PC-3 (cell line): ENCODE measurements at regions of chr4 and their contacts with region 1.

Region 1: GRCh38 chr4:47485047-47485692 is at the start of gene ATP10D:
- DNase-seq: peak; percentile 83
- ATAC-seq: peak; percentile 100
- H3K4me3 ChIP-seq: peak within 1 kb of the TSS; percentile 79
- H3K27ac ChIP-seq: peak within 1 kb of the TSS; percentile 44
- H3K4me1 ChIP-seq: peaks cover 11% of the 10 kb centered on the region
- H3K27me3 ChIP-seq: no peaks in the 10 kb centered on the region
- CTCF ChIP-seq: no peak
- total RNA-seq, gene ATP10D: 0.84 and 4.0 TPM in 2 replicates

Region 2: DNA sequence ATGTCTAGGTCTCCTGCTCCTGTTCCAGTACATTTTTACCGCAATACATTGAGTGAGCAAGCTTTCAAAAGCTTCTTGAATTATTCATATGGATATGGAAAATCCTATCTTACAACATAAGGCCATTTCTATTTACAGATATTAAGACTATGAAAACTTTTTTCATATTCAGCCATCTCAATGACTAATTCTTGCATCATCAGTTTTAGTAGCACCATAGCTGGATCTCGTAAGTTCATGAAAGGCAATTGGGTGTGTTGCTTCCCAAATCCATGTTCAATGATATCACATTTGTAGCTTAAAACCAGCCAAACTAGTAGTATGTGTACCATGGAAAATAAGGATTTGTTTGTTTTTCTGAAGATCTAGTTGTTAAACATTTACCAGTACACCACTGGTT is 977.0 kb before region 1 on chr4:
- CTCF ChIA-PET with region 1: no interaction called
- POLR2A ChIA-PET with region 1: interaction called, 10 read pairs
- intact Hi-C with region 1: no loop called
- DNase-seq: peak; percentile 85
- ATAC-seq: peak; percentile 48
- H3K4me3 ChIP-seq: peak overlapping the region; percentile 11; the same call in 1 of the 2 replicates
- H3K27ac ChIP-seq: peak overlapping the region; percentile 87
- H3K4me1 ChIP-seq: peaks cover 32% of the 10 kb centered on the region
- H3K27me3 ChIP-seq: no peaks in the 10 kb centered on the region
- CTCF ChIP-seq: no peak

Region 3: DNA sequence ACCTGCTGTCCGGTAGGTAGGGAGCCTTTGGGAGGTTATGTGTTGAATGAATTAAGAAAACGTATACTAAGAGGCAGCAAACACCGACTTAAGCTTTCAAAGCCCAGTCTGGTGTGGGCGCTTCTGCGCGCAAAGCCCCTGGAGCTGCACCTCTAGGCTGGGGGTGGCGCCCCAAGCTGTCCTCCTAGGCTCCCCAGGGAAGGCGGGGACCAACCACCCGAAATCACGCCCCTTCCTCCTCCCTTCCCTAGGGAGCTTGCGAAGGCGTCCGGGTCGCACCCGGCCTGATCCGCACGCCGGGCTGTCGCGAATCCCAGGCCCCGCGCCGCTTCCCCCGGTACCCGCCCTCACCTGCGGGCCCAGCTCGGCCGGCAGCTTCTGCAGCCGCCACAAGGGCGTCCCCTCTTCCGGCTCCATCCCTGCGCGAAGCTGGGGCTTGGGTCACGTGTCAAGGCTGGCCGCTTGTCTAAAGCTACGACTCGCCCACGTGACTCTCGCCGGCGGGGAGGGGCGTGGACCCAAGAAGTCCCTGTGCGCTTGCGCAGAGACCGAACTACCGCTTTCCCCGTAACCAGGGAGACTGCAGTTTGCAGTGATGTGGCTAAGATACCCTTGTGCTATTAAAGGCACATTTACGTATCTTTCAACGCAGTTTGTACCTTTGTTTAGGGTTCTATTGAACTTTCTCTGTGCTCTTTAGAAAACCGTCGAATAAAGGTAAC is 21.8 kb before region 1 on chr4 and contains the start of gene COMMD8:
- CTCF ChIA-PET with region 1: interaction called, 3 read pairs
- POLR2A ChIA-PET with region 1: no interaction called
- intact Hi-C with region 1: loop called (anchors 1 kb)
- DNase-seq: peak; percentile 82
- ATAC-seq: peak; percentile 95
- H3K4me3 ChIP-seq: peak within 1 kb of the TSS; percentile 70
- H3K27ac ChIP-seq: no peak within 1 kb of the TSS
- H3K4me1 ChIP-seq: no peaks in the 10 kb centered on the region; the same call in 1 of the 2 replicates
- H3K27me3 ChIP-seq: no peaks in the 10 kb centered on the region
- CTCF ChIP-seq: no peak
- total RNA-seq, gene COMMD8: 5.5 and 9.5 TPM in 2 replicates

Region 4: DNA sequence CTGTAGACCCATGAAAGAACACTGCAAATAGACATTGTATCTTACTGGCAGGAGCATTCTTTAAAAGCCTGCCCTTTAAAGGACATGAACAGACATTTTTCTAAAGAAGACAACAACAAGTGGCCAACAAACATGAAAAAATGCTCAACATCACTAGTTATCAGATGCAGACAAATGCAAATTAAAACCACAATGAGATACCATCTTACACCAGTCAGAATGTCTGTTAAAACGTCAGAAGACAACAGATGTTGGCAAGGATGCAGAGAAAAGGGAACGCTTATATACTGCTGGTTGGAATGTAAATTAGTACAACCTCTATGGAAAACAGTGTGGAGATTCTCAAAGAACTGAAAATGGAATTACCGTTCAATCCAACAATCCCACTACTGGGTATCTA is 77.1 kb after region 1 on chr4:
- CTCF ChIA-PET with region 1: interaction called, 3 read pairs
- POLR2A ChIA-PET with region 1: no interaction called
- intact Hi-C with region 1: loop called (anchors 1 kb)
- DNase-seq: no peak
- ATAC-seq: no peak
- H3K4me3 ChIP-seq: no peak overlapping the region
- H3K27ac ChIP-seq: no peak overlapping the region
- H3K4me1 ChIP-seq: peaks cover 8% of the 10 kb centered on the region; the same call in 1 of the 2 replicates
- H3K27me3 ChIP-seq: no peaks in the 10 kb centered on the region
- CTCF ChIP-seq: no peak